ENCODE measurements at regions of chr14 and their contacts with region 1.

Region 1: GRCh38 chr14:75861161-75861621 is 120.6 kb downstream of the TGFB3 start:
- DNase-seq: peak; percentile 75 to 78
- H3K4me3 ChIP-seq: no peak overlapping the region
- H3K4me3 Mint-ChIP-seq: peak overlapping the region; percentile 59
- H3K27ac Mint-ChIP-seq: peak overlapping the region; percentile 95
- H3K4me1 ChIP-seq: peaks cover 39% of the 10 kb centered on the region
- H3K4me1 Mint-ChIP-seq: peaks cover 42% of the 10 kb centered on the region
- H3K27me3 ChIP-seq: no peaks in the 10 kb centered on the region
- H3K27me3 Mint-ChIP-seq: no peaks in the 10 kb centered on the region
- CTCF ChIP-seq: no peak

Region 2: DNA sequence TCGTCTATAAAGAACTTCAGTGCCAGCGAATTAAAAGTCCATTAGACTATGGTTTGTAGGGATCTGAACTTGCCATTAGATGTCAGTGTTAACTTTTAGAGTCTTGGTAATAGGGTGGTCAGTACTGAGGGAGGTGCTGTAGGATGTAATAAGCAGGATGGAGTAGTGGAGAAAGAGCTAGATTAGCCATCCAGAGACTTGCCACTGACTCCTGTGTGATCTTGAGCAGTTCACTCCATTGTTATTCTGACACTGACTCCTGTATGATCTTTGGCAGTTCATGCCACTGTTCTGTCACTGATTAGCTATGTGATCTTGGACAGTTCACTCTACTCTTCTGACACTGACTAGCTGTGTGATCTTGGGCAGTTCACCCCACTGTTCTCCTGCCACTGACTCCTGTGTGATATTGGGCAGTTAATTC is 66.6 kb before region 1 on chr14:
- CTCF ChIA-PET with region 1: interaction called, 50 read pairs
- POLR2A ChIA-PET with region 1: interaction called, 3 read pairs
- intact Hi-C with region 1: loop called (anchors 1 kb)
- DNase-seq: peak in 1 of 2 experiments; percentile 42
- H3K4me3 ChIP-seq: no peak overlapping the region
- H3K4me3 Mint-ChIP-seq: no peak overlapping the region
- H3K27ac Mint-ChIP-seq: no peak overlapping the region
- H3K4me1 ChIP-seq: no peaks in the 10 kb centered on the region
- H3K4me1 Mint-ChIP-seq: peaks cover 5% of the 10 kb centered on the region
- H3K27me3 ChIP-seq: no peaks in the 10 kb centered on the region
- H3K27me3 Mint-ChIP-seq: no peaks in the 10 kb centered on the region
- CTCF ChIP-seq: peak; percentile 28 to 57

Region 3: GRCh38 chr14:75811872-75812499 is 49.2 kb before region 1 on chr14:
- CTCF ChIA-PET with region 1: interaction called, 9 read pairs
- POLR2A ChIA-PET with region 1: interaction called, 8 read pairs
- intact Hi-C with region 1: loop called (anchors 1 kb)
- DNase-seq: peak; percentile 68 to 69
- H3K4me3 ChIP-seq: no peak overlapping the region
- H3K4me3 Mint-ChIP-seq: peak overlapping the region; percentile 54
- H3K27ac Mint-ChIP-seq: peak overlapping the region; percentile 85
- H3K4me1 ChIP-seq: peaks cover 20% of the 10 kb centered on the region
- H3K4me1 Mint-ChIP-seq: peaks cover 23% of the 10 kb centered on the region
- H3K27me3 ChIP-seq: no peaks in the 10 kb centered on the region
- H3K27me3 Mint-ChIP-seq: no peaks in the 10 kb centered on the region
- CTCF ChIP-seq: no peak

Region 4: GRCh38 chr14:75831458-75831857 is 29.7 kb before region 1 on chr14:
- CTCF ChIA-PET with region 1: interaction called, 13 read pairs
- POLR2A ChIA-PET with region 1: interaction called, 14 read pairs
- intact Hi-C with region 1: loop called (anchors 1 kb)
- DNase-seq: peak; percentile 92
- H3K4me3 ChIP-seq: no peak overlapping the region
- H3K4me3 Mint-ChIP-seq: peak overlapping the region; percentile 44
- H3K27ac Mint-ChIP-seq: peak overlapping the region; percentile 87
- H3K4me1 ChIP-seq: peaks cover 58% of the 10 kb centered on the region
- H3K4me1 Mint-ChIP-seq: peaks cover 24% of the 10 kb centered on the region
- H3K27me3 ChIP-seq: no peaks in the 10 kb centered on the region
- H3K27me3 Mint-ChIP-seq: no peaks in the 10 kb centered on the region
- CTCF ChIP-seq: no peak

Region 5: DNA sequence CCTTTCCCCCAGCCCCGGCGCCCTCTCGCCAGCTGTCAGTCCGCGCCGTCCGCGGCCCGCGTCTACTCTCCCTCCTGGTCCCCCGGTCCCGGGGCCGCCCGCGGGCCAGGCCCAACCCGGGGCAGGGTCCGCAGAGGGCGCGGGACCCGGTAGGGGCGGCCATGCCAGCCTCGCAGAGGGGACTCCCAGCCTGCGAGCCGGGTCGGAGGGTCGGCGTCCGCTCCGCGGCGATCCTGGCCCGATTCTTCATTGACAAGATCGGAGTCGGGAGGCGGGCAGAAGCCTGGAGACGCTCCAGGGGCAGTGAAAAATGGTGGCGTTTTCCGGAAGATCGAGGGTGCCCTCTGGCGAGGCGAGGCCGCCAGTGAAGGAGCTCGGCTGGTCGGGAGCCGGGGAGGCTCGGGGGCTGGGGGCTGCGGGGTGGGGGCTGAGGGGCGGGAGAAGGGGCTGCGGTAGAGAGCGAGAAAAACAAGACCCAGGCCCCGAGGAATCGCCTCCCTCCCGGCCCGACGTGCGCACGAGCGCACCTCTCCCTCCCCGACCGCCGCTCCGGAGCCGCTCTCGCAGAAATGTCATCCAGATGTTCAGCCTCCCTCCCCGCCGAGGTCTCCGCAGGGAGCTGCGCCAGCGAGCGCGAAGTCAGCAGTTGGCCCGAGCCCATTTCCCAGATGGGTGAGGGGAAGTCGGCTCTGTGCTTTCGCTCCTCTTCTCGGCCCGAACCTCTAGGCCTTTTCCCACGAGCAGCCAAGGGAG is 121.3 kb after region 1 on chr14:
- CTCF ChIA-PET with region 1: interaction called, 19 read pairs
- POLR2A ChIA-PET with region 1: interaction called, 3 read pairs
- intact Hi-C with region 1: loop called (anchors 2 kb)
- DNase-seq: peak; percentile 78 to 89
- H3K4me3 ChIP-seq: peak overlapping the region; percentile 56
- H3K4me3 Mint-ChIP-seq: peak overlapping the region; percentile 79
- H3K27ac Mint-ChIP-seq: peak overlapping the region; percentile 39
- H3K4me1 ChIP-seq: peaks cover 8% of the 10 kb centered on the region
- H3K4me1 Mint-ChIP-seq: peaks cover 34% of the 10 kb centered on the region
- H3K27me3 ChIP-seq: no peaks in the 10 kb centered on the region
- H3K27me3 Mint-ChIP-seq: no peaks in the 10 kb centered on the region
- CTCF ChIP-seq: peak; percentile 77 to 78